Activated CD4-positive, alpha-beta memory T cell treated with anti-CD3 and anti-CD28 coated beads, Interleukin-2, amount 10 ng/mL, durations not matched to agents 7 days and 5 days (primary cell): ENCODE measurements at regions of chr10 and their contacts with region 1.

Region 1: DNA sequence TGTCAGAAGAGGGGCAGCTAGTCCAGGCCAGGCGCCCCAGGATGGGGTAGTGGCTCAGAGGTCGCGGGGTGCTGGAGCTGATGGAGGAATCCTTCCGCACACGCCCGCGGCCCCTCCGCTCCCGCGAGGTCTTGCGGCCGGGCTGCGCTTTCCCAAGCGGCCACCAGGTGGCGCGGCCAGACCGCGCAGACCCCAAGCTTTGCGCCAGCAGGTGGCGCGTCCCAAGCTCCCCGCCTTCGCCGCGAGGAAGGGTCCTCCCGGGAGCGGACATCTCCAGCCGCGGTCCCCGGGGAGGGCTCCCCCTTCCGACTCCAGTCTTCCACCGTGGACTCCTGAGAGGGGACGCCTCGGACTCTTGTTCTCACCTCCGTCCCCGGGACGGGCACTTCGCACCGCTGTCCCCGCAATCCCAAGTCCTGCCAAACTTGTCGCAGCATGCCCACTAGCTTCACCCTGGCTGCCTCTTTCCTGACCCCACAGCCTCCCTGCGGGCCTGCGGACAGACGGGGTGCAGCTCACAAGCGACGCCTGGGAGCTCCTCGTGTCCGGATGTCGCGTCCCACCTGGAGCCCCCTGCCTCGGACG is 19.4 kb downstream of the KCNK18 start:
- DNase-seq: peak; percentile 68
- H3K4me3 Mint-ChIP-seq: peak overlapping the region; percentile 52
- H3K27ac Mint-ChIP-seq: no peak overlapping the region
- H3K4me1 Mint-ChIP-seq: peaks cover 7% of the 10 kb centered on the region
- H3K27me3 Mint-ChIP-seq: peaks cover 30% of the 10 kb centered on the region

Region 2: GRCh38 chr10:117174439-117175214 is 42.1 kb before region 1 on chr10:
- CTCF ChIA-PET with region 1: interaction called, 11 read pairs
- POLR2A ChIA-PET with region 1: interaction called, 3 read pairs
- DNase-seq: peak; percentile 83
- H3K4me3 Mint-ChIP-seq: peak overlapping the region; percentile 78
- H3K27ac Mint-ChIP-seq: no peak overlapping the region
- H3K4me1 Mint-ChIP-seq: peaks cover 19% of the 10 kb centered on the region
- H3K27me3 Mint-ChIP-seq: peaks cover 38% of the 10 kb centered on the region

Region 3: GRCh38 chr10:117226824-117227451 is 10.2 kb after region 1 on chr10:
- CTCF ChIA-PET with region 1: interaction called, 15 read pairs
- POLR2A ChIA-PET with region 1: no interaction called
- DNase-seq: no peak
- H3K4me3 Mint-ChIP-seq: no peak overlapping the region
- H3K27ac Mint-ChIP-seq: no peak overlapping the region
- H3K4me1 Mint-ChIP-seq: no peaks in the 10 kb centered on the region
- H3K27me3 Mint-ChIP-seq: peaks cover 4% of the 10 kb centered on the region

Region 4: GRCh38 chr10:117284716-117285494 is 68.2 kb after region 1 on chr10:
- CTCF ChIA-PET with region 1: interaction called, 14 read pairs
- POLR2A ChIA-PET with region 1: no interaction called
- DNase-seq: no peak
- H3K4me3 Mint-ChIP-seq: no peak overlapping the region
- H3K27ac Mint-ChIP-seq: no peak overlapping the region
- H3K4me1 Mint-ChIP-seq: no peaks in the 10 kb centered on the region
- H3K27me3 Mint-ChIP-seq: no peaks in the 10 kb centered on the region

Region 5: DNA sequence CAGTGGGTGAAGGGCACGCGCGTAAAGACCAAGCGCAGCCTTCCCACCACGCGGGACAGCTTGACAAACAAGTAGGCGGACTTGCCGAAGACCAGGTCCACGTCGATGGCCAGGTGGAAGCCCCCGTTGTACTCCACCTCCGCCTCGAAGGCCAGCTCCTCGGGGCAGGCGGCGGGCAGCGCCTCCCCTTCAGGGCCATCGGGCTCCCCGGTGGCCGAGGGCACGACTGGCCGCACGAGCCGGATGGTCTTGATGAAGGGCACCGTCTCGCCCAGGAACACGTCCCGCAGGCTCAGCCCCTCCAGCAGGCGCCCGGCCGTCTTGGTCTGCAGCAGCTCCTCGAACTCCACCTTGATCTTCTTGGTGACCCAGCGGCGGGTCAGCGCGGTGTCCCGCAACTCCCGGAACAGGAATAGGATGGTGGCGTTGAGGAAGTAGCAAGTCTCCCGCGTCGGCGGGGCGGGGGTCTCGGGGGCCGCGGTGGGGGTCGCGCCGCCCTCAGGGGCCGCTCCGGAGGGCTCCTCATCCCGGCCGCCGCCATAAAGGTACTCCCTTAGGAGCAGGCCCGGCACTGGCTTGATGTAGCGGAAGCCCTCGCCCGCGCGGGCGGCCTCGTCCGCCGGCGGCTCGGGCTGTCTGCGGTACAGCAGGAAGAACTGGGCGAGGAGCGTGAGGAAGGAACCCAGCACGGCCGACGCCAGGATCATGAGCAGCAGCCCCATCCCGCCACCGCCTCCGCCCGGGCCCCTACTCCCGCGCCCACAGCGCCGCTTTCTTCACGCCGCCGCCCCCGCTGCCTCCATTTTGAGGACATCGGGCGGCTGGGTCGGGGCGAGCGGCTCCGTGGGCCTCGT is 158.0 kb after region 1 on chr10:
- CTCF ChIA-PET with region 1: interaction called, 12 read pairs
- POLR2A ChIA-PET with region 1: interaction called, 7 read pairs
- DNase-seq: peak; percentile 41
- H3K4me3 Mint-ChIP-seq: peak overlapping the region; percentile 96
- H3K27ac Mint-ChIP-seq: peak overlapping the region; percentile 78
- H3K4me1 Mint-ChIP-seq: peaks cover 31% of the 10 kb centered on the region
- H3K27me3 Mint-ChIP-seq: peaks cover 28% of the 10 kb centered on the region